T-cell (primary cell): ENCODE measurements at regions of chr22 and their contacts with region 1.

Region 1: DNA sequence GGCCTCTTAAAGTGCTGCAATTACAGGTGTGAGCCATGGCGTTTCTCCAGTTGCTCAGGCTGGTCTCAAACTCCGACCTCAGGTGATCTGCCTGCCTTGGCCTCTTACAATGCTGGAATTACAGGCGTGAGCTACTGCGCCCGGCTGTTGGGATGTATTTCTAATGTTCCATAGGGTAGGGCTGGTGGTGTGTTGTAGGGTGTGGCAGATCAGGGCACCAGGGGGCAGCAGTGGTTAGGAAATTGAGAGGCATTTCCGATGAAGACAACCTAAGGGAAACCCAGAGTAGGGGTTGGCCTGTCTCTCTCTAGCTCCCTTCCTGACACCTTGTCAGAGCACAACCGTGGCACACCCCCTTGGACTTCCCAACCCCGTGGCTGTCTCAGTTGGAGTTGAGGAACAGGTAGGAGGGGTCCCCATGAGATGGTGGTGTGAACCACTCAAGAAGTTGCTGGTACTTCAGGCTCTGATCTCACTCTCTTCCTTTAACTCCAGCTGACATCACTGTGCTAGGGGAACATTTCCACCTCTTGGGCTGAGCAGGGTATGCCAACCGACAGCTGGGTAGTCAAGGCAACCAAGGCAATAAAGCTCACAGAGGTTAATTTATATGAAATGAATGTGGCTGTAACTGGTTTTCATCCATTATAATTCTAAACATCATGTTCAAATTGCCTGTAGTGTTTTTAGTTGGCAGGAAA is 33.0 kb downstream of the YWHAH start:
- DNase-seq: peak; percentile 35 to 81 (median 71)
- ATAC-seq: peak; percentile 79 to 96 (median 88)
- H3K4me3 ChIP-seq: no peak overlapping the region
- H3K4me3 Mint-ChIP-seq: no peak overlapping the region
- H3K27ac ChIP-seq: no peak overlapping the region
- H3K27ac Mint-ChIP-seq: no peak overlapping the region
- H3K4me1 ChIP-seq: no peaks in the 10 kb centered on the region
- H3K4me1 Mint-ChIP-seq: peaks cover 2 to 9% (median 5%) of the 10 kb centered on the region in 3 donors
- H3K27me3 ChIP-seq: peaks cover 0 to 3% of the 10 kb centered on the region in 2 experiments
- H3K27me3 Mint-ChIP-seq: no peaks in the 10 kb centered on the region

Region 2: GRCh38 chr22:32066820-32067219 is 89.5 kb after region 1 on chr22:
- CTCF ChIA-PET with region 1: no interaction called
- POLR2A ChIA-PET with region 1: no interaction called
- DNase-seq: no peak
- ATAC-seq: no peak
- H3K4me3 ChIP-seq: no peak overlapping the region
- H3K4me3 Mint-ChIP-seq: no peak overlapping the region
- H3K27ac ChIP-seq: no peak overlapping the region
- H3K27ac Mint-ChIP-seq: no peak overlapping the region
- H3K4me1 ChIP-seq: no peaks in the 10 kb centered on the region
- H3K4me1 Mint-ChIP-seq: no peaks in the 10 kb centered on the region
- H3K27me3 ChIP-seq: peaks cover 2 to 16% of the 10 kb centered on the region in 2 experiments
- H3K27me3 Mint-ChIP-seq: peaks cover 10 to 22% of the 10 kb centered on the region in 2 donors

Region 3: DNA sequence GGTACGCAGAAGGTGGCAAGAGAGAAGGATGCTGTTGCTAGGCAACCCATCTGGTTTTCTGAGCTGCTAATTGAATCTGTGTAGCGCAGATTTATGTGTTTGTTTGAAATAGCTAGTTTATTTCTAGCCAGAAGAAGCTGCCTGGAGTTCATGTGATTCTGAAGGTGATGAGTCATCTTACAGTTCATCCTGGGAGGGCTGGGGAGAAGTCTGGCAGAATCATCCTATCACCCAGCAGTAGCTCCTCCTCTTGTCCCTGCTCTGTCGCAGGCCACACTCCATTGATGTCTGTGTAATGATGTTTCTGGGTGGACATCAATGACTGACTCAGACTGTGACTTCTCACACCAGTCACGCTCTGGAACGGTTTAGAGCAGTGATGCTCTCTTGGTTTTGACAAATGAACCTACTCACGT is 492.5 kb after region 1 on chr22:
- CTCF ChIA-PET with region 1: no interaction called
- POLR2A ChIA-PET with region 1: interaction called in 1 of 2 experiments, 10 read pairs
- DNase-seq: no peak
- ATAC-seq: no peak
- H3K4me3 ChIP-seq: no peak overlapping the region
- H3K4me3 Mint-ChIP-seq: no peak overlapping the region
- H3K27ac ChIP-seq: no peak overlapping the region
- H3K27ac Mint-ChIP-seq: no peak overlapping the region
- H3K4me1 ChIP-seq: peaks cover 6 to 11% of the 10 kb centered on the region in 2 experiments
- H3K4me1 Mint-ChIP-seq: peaks cover 10 to 12% (median 11%) of the 10 kb centered on the region in 3 donors
- H3K27me3 ChIP-seq: peaks cover 6 to 11% of the 10 kb centered on the region in 2 experiments
- H3K27me3 Mint-ChIP-seq: peaks cover 15 to 23% of the 10 kb centered on the region in 2 donors

Region 4: DNA sequence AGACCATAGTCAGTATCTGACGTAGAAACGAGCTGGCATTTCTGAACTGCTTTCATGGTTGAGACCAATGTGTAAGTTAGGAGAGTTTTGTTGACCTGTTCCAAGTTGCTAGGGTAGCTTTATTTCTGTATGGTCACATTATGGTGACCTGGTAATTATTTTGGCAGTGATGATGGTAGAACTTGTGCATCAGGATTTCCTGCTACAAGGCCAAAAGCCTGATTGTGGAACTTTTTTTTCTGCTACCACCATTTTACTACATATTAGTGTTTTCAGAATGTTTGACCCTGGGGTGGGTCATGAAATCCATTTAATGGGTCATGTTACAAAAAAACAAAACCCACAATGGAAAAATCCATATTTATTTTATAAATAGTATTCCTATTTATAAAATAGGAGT is 516.3 kb after region 1 on chr22:
- CTCF ChIA-PET with region 1: interaction called in 1 of 2 experiments, 11 read pairs
- POLR2A ChIA-PET with region 1: no interaction called
- DNase-seq: no peak
- ATAC-seq: no peak
- H3K4me3 ChIP-seq: no peak overlapping the region
- H3K4me3 Mint-ChIP-seq: no peak overlapping the region
- H3K27ac ChIP-seq: no peak overlapping the region
- H3K27ac Mint-ChIP-seq: no peak overlapping the region
- H3K4me1 ChIP-seq: no peaks in the 10 kb centered on the region
- H3K4me1 Mint-ChIP-seq: no peaks in the 10 kb centered on the region
- H3K27me3 ChIP-seq: no peaks in the 10 kb centered on the region
- H3K27me3 Mint-ChIP-seq: no peaks in the 10 kb centered on the region